Caco-2 (cell line): ENCODE measurements at regions of chr3 and their contacts with region 1.

Region 1: GRCh38 chr3:113495035-113495434 is 19.9 kb downstream of the SPICE1 start:
- DNase-seq: peak; percentile 41 to 42
- H3K4me3 ChIP-seq: no peak overlapping the region
- H3K4me3 Mint-ChIP-seq: no peak overlapping the region
- H3K27ac Mint-ChIP-seq: no peak overlapping the region
- H3K4me1 ChIP-seq: no peaks in the 10 kb centered on the region
- H3K4me1 Mint-ChIP-seq: no peaks in the 10 kb centered on the region
- H3K27me3 ChIP-seq: no peaks in the 10 kb centered on the region
- H3K27me3 Mint-ChIP-seq: no peaks in the 10 kb centered on the region
- CTCF ChIP-seq: peak; percentile 27 to 53

Region 2: DNA sequence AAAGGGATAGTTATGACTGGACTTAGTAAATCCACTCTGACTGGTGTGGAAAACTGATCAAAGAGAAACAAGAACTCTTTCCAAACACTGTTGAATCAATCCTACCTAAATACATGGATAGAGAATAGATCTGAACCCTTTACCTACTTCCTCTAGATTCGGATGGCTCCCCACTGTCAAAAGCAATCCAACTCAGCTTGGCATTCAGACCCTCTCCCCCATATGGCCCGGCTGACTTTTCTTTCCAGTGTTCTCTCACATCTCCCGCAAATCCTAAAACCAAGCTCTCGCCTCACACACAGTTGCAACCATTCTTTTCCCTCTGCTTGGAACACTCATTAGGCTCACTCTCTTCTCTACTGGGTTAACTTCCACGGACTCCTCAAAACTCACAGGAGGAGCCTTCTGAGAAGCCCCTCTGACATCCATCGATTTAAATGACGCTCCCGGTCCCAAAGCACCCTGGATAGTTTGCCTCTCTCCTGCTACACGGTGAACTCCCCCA is 19.3 kb after region 1 on chr3:
- CTCF ChIA-PET with region 1: no interaction called
- POLR2A ChIA-PET with region 1: no interaction called
- intact Hi-C with region 1: loop called (anchors 1 kb)
- DNase-seq: peak in 1 of 2 experiments; percentile 6
- H3K4me3 ChIP-seq: peak overlapping the region; percentile 83
- H3K4me3 Mint-ChIP-seq: no peak overlapping the region
- H3K27ac Mint-ChIP-seq: no peak overlapping the region
- H3K4me1 ChIP-seq: no peaks in the 10 kb centered on the region
- H3K4me1 Mint-ChIP-seq: peaks cover 8% of the 10 kb centered on the region
- H3K27me3 ChIP-seq: no peaks in the 10 kb centered on the region
- H3K27me3 Mint-ChIP-seq: no peaks in the 10 kb centered on the region
- CTCF ChIP-seq: no peak

Region 3: GRCh38 chr3:113531826-113532697 is 37.0 kb after region 1 on chr3 and contains the start of gene SIDT1:
- CTCF ChIA-PET with region 1: no interaction called
- POLR2A ChIA-PET with region 1: no interaction called
- intact Hi-C with region 1: loop called (anchors 1 kb)
- DNase-seq: peak in 1 of 2 experiments; percentile 21
- H3K4me3 ChIP-seq: peak within 1 kb of the TSS; percentile 57
- H3K4me3 Mint-ChIP-seq: peak within 1 kb of the TSS; percentile 82
- H3K27ac Mint-ChIP-seq: peak within 1 kb of the TSS; percentile 43
- H3K4me1 ChIP-seq: no peaks in the 10 kb centered on the region
- H3K4me1 Mint-ChIP-seq: peaks cover 7% of the 10 kb centered on the region
- H3K27me3 ChIP-seq: 0 out of 2 replicates have a peak, but pooled peaks cover 3% of the 10 kb centered on the region
- H3K27me3 Mint-ChIP-seq: peaks cover 15% of the 10 kb centered on the region
- CTCF ChIP-seq: no peak
- total RNA-seq, gene SIDT1: 0.84 and 1.0 TPM in 2 replicates

Region 4: GRCh38 chr3:113552851-113553250 is 57.8 kb after region 1 on chr3:
- CTCF ChIA-PET with region 1: interaction called, 6 read pairs
- POLR2A ChIA-PET with region 1: no interaction called
- intact Hi-C with region 1: loop called (anchors 1 kb)
- DNase-seq: no peak
- H3K4me3 ChIP-seq: no peak overlapping the region
- H3K4me3 Mint-ChIP-seq: no peak overlapping the region
- H3K27ac Mint-ChIP-seq: peak overlapping the region; percentile 77
- H3K4me1 ChIP-seq: peaks cover 39% of the 10 kb centered on the region
- H3K4me1 Mint-ChIP-seq: peaks cover 29% of the 10 kb centered on the region
- H3K27me3 ChIP-seq: no peaks in the 10 kb centered on the region
- H3K27me3 Mint-ChIP-seq: no peaks in the 10 kb centered on the region
- CTCF ChIP-seq: no peak